Activated CD4-positive, alpha-beta T cell treated with anti-CD3 and anti-CD28 coated beads for 36 hours (primary cell): ENCODE measurements at regions of chr15 and their contacts with region 1.

Region 1: GRCh38 chr15:39580117-39580484 is 778 bp upstream of the THBS1 start:
- DNase-seq: peak; percentile 93
- ATAC-seq: peak; percentile 90
- H3K4me3 Mint-ChIP-seq: peak overlapping the region; percentile 53
- H3K27ac Mint-ChIP-seq: no peak overlapping the region
- H3K4me1 Mint-ChIP-seq: peaks cover 13% of the 10 kb centered on the region
- H3K27me3 Mint-ChIP-seq: peaks cover 55% of the 10 kb centered on the region

Region 2: DNA sequence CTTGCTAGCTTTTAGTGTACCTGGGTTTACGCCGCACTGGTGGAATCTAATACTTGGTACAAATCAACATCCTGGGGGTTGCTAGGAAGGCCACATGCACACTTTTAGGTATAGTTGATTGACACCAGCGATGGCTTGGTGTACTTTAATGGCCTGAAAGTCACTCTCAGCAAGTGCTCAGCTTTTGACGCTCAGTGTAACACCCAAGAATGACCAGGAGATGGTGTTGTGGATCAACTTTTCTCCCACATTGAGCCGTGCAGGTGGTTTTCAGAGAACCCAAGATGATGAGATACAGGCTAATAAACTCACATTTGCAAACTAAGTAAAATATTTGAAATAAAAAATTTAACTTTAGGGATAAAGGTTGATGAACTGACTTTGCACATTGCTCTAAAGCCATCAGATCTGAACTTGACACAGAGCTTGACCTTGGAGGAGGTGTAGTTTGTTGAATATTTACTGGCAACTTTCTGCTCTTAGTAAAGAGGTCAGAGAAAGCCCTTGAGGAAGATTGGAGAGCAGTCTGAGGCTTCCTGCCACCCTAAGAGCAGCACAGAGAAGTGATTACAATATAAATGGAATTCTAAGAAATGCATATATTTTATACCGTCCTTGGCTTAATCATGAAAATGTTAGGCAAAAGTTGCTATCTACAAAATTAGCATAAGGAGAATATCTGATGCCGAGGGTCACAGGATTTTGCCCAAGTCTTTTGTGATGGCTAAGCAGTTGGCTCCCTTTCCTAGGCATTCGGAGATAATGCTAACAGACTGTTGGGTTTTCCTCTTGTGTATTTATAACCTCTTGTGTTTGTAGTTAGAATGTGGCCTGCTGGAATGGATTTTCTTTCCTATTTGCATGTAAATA is 872.1 kb before region 1 on chr15:
- CTCF ChIA-PET with region 1: no interaction called
- POLR2A ChIA-PET with region 1: no interaction called
- intact Hi-C with region 1: loop called (anchors 2 to 5 kb)
- DNase-seq: peak; percentile 48
- ATAC-seq: peak; percentile 91
- H3K4me3 Mint-ChIP-seq: no peak overlapping the region
- H3K27ac Mint-ChIP-seq: no peak overlapping the region
- H3K4me1 Mint-ChIP-seq: peaks cover 7% of the 10 kb centered on the region
- H3K27me3 Mint-ChIP-seq: no peaks in the 10 kb centered on the region

Region 3: DNA sequence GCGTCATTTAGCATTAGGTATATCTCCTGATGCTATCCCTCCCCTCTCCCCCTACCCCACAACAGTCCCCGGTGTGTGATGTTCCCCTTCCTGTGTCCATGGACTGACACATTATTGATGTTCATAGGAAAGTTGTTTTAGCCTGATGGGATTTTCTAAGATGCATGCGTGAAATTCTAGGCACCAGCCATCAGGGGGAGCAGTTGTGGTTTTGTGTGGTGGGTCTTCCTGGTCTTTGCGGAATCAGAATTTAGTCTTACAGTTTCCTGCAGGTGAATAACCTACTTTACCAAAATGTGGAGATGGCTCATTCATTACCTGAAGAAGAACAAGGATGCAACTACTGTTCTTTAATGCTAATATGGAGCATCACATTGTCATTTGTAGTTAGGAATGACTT is 454.2 kb before region 1 on chr15:
- CTCF ChIA-PET with region 1: interaction called, 3 read pairs
- POLR2A ChIA-PET with region 1: no interaction called
- intact Hi-C with region 1: loop called (anchors 1 kb)
- DNase-seq: peak; percentile 56
- ATAC-seq: no peak
- H3K4me3 Mint-ChIP-seq: no peak overlapping the region
- H3K27ac Mint-ChIP-seq: no peak overlapping the region
- H3K4me1 Mint-ChIP-seq: no peaks in the 10 kb centered on the region
- H3K27me3 Mint-ChIP-seq: peaks cover 7% of the 10 kb centered on the region

Region 4: GRCh38 chr15:39312984-39313383 is 267.1 kb before region 1 on chr15:
- CTCF ChIA-PET with region 1: interaction called, 3 read pairs
- POLR2A ChIA-PET with region 1: no interaction called
- intact Hi-C with region 1: loop called in 1 of 2 experiments (anchors 5 kb)
- DNase-seq: peak; percentile 7
- ATAC-seq: no peak
- H3K4me3 Mint-ChIP-seq: no peak overlapping the region
- H3K27ac Mint-ChIP-seq: no peak overlapping the region
- H3K4me1 Mint-ChIP-seq: no peaks in the 10 kb centered on the region
- H3K27me3 Mint-ChIP-seq: peaks cover 3% of the 10 kb centered on the region

Region 5: DNA sequence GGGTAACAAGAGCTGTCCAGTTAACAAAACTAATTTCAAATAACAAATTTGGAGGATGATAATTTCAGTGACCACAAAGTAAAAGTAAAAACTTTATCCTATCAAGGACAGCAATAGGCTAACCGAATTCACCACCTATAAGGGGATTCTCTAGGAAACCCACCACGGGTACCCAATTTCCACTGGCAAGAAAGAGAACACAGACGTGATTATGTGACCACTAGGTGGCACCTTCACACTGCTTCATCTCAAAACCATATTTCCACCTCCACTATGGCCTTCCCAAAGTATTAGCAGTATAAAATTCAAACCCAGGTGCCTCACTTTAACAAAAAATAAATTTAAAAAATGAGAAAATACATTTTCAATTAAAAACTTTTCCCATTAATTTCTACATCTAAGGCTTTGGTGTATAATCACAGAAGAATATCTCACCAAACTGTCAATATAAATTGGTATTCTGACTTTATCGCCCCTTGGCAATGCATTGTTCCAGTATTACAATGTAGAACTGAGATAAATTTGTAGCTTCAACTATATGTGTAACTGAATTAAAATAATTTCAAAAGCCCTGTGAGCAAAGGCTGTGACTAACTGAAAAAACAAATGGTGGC is 106.0 kb after region 1 on chr15:
- CTCF ChIA-PET with region 1: interaction called, 4 read pairs
- POLR2A ChIA-PET with region 1: no interaction called
- intact Hi-C with region 1: loop called in 1 of 2 experiments (anchors 5 kb)
- DNase-seq: peak; percentile 46
- ATAC-seq: no peak
- H3K4me3 Mint-ChIP-seq: no peak overlapping the region
- H3K27ac Mint-ChIP-seq: no peak overlapping the region
- H3K4me1 Mint-ChIP-seq: peaks cover 1% of the 10 kb centered on the region
- H3K27me3 Mint-ChIP-seq: no peaks in the 10 kb centered on the region